PC-9 (cell line): ENCODE measurements at regions of chr5 and their contacts with region 1.

Region 1: DNA sequence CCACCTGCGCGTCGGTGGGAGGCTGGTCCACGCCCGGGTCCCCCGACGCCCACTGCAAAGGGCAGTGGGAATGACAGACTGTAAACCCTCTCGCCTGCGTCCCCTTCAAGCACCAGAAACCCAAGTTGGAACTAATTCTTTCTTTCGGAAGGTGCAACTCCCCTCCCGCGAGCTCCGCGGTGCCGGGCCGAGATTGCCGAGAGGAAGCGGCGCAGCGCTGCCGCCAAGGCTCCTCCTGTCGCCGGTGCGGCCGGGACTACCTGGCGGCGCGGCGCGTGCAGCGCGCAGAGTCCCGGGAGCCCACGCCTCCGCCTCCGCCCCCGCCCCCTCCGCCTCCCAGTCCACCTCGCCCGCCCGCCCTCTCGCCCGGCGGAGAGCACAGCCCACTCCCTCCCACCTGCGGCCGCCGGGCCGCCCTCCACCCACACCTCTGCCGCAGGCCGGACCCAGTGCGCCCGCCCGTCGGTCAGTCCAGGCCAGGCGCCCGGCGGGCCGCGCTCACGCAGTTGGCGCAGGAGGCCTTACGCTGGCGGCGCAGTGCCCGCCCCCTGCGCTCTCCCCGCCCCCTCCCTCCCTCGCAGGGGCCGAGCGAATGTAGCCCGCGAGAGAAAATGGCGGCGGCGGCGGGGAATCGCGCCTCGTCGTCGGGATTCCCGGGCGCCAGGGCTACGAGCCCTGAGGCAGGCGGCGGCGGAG is at the start of gene MAP3K1:
- DNase-seq: peak; percentile 83 to 93
- H3K4me3 ChIP-seq: peak within 1 kb of the TSS; percentile 96
- H3K27ac ChIP-seq: peak within 1 kb of the TSS; percentile 91
- H3K4me1 ChIP-seq: peaks cover 50% of the 10 kb centered on the region
- H3K27me3 ChIP-seq: no peaks in the 10 kb centered on the region
- CTCF ChIP-seq: no peak
- total RNA-seq, gene MAP3K1: 21.8 and 26.1 TPM in 2 replicates

Region 2: GRCh38 chr5:56350598-56351170 is 464.4 kb before region 1 on chr5:
- CTCF ChIA-PET with region 1: no interaction called
- POLR2A ChIA-PET with region 1: no interaction called
- intact Hi-C with region 1: loop called (anchors 1 kb)
- DNase-seq: peak; percentile 81 to 94
- H3K4me3 ChIP-seq: no peak overlapping the region; the same call in 1 of the 2 replicates
- H3K27ac ChIP-seq: peak overlapping the region; percentile 76
- H3K4me1 ChIP-seq: peaks cover 73% of the 10 kb centered on the region
- H3K27me3 ChIP-seq: no peaks in the 10 kb centered on the region
- CTCF ChIP-seq: no peak

Region 3: DNA sequence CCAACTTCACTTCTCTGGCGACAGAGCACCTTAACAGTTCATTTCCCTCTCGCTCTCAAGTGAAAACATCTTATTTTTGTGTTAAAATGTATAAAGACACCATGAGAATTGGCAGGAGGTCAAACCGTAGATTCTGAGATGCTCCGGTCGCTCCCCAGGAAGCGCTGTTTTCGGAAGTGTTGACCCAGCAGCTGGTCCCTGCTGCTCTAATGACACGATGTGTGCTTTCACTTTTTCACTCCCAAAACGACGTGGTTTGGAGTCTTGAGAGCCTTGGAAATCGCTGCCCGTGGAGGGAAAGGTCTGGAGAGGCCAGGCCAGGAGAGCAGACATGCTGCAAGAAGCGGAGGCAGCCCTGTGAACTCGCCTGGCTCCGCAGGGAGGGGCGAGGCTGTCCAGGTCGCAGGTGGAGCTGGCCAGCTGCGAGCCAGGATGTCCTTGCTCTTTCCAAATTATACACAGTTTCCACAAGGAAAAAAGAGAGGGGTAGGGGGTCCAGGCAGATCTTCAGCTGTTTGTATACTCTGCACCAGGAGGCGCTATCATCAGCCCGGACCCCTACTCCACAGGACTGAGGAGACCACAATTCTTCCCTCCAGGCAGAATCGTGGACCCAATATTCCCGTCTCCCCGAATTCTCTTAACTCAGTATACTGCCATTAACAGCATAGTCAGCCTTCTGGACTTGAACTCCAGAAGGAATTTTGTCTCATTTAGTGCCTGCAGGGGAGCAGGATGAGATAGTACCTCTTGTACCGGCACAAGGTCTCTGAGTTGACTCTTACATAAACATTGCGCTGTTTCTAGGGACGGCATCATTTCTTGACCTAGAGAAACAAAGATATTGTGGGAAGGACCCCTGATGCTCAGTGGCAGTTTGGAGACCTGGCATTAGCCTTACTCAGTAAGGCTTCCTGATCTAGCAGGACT is 333.4 kb before region 1 on chr5:
- CTCF ChIA-PET with region 1: no interaction called
- POLR2A ChIA-PET with region 1: no interaction called
- intact Hi-C with region 1: loop called (anchors 5 kb)
- DNase-seq: peak; percentile 34 to 47
- H3K4me3 ChIP-seq: peak overlapping the region; percentile 78
- H3K27ac ChIP-seq: peak overlapping the region; percentile 85
- H3K4me1 ChIP-seq: peaks cover 38% of the 10 kb centered on the region
- H3K27me3 ChIP-seq: no peaks in the 10 kb centered on the region
- CTCF ChIP-seq: peak; percentile 29; the same call in 1 of the 2 replicates

Region 4: GRCh38 chr5:56638061-56638621 is 177.0 kb before region 1 on chr5:
- CTCF ChIA-PET with region 1: no interaction called
- POLR2A ChIA-PET with region 1: interaction called, 3 read pairs
- intact Hi-C with region 1: loop called (anchors 2 kb)
- DNase-seq: peak; percentile 64 to 70
- H3K4me3 ChIP-seq: no peak overlapping the region
- H3K27ac ChIP-seq: no peak overlapping the region
- H3K4me1 ChIP-seq: peaks cover 40% of the 10 kb centered on the region
- H3K27me3 ChIP-seq: no peaks in the 10 kb centered on the region
- CTCF ChIP-seq: no peak

Region 5: DNA sequence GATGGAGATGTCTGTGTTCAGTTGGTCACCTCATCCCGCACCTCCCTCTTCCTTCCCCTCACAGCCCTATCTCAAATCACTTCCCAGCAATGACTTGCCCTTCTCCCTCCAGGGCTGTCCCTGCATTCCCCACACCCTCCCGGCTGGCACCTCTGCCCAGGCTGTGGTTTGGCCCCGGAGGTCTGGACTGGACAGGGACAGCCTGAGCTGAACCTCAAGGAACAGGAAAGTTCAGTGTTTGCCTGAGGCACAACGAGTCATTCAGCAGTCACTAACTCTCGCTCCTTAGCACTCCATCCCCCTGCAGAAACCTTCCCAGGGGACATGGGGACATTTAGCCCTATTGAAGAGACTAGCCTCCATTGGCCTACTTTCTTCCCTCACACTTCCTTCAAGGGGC is 58.0 kb before region 1 on chr5:
- CTCF ChIA-PET with region 1: no interaction called
- POLR2A ChIA-PET with region 1: interaction called, 4 read pairs
- intact Hi-C with region 1: loop called (anchors 1 kb)
- DNase-seq: peak; percentile 94 to 95
- H3K4me3 ChIP-seq: 0 out of 2 replicates have a peak overlapping the region, but pooled peaks have one; percentile 13
- H3K27ac ChIP-seq: peak overlapping the region; percentile 65
- H3K4me1 ChIP-seq: peaks cover 48% of the 10 kb centered on the region
- H3K27me3 ChIP-seq: no peaks in the 10 kb centered on the region
- CTCF ChIP-seq: no peak

Region 6: DNA sequence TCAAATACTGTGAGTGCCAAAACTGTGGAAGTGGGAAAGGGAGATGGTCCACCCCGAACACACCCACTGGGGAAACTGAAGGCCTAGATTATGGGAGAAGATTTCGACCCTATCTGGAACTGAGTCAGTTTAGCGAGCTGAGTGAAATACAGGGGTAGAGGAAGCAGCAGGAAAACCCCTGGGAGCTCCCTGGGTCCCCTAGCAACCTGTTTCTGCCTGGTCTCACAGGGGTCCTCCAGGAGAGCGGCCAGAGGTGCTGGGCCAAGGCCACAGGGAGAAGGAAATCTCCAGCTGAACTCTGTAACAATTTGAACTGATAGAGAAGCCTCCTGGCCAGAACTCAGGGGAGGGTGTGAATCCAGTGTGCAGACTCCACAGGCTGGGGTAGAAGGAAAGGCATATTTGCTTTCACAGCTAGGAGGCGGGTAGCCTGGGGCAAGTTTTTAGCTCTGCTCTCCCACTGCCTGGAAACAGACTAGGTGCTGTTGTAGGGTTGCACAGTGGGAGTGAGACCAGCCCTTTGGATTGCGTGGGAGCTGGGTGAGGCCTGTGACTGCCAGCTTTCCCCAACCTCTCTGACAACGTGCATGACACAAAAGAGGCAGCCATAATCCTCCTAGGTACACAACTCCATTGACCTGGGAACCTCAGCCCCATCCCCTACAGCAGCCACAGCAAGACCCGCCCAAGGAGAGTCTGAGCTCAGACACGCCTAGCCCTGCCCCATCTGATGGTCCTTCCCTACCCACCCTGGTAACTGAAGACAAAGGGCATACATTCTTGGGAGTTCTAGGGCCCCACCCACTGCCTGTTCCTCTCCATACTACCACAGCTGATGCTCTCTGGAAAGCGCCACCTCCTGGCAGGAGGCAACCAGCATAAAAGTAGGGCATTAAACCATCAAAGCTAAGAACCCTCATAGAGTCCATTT is 279.9 kb after region 1 on chr5:
- CTCF ChIA-PET with region 1: interaction called, 10 read pairs
- POLR2A ChIA-PET with region 1: no interaction called
- intact Hi-C with region 1: no loop called
- DNase-seq: peak; percentile 58 to 68
- H3K4me3 ChIP-seq: no peak overlapping the region
- H3K27ac ChIP-seq: peak overlapping the region; percentile 31; the same call in 1 of the 2 replicates
- H3K4me1 ChIP-seq: peaks cover 20% of the 10 kb centered on the region
- H3K27me3 ChIP-seq: no peaks in the 10 kb centered on the region
- CTCF ChIP-seq: peak; percentile 59

Region 7: DNA sequence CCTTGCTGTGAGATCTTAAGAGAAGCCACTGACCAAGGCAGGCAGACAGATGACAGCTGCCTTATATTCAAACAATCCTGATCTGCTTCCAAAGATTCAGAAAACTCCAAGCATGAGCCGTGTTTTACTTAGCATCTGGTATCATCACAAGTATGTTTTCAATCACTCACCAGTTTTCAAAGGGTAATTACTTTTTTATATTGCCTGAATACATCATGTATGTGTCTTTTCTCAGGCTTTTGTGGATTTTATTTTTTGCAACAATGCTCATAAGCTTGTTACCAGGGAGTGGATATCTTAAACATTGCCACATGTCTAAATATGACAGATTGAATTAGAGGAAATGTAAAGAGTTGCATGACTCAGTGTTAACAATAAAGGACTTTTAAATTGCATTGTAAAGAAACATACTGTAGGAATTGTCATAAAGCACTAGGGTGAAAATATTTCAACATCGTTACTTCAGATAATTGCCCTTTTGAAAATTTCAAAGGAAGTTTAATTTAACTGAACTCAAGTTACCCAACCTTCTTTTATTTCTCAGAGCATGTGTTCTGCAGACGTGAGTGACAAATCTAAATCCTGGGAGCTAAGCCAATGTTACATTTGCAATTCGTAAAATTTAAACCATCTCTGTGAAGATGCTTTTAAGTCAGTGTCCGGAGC is 1318.7 kb after region 1 on chr5:
- CTCF ChIA-PET with region 1: no interaction called
- POLR2A ChIA-PET with region 1: no interaction called
- intact Hi-C with region 1: no loop called
- DNase-seq: peak in 1 of 2 experiments; percentile 58
- H3K4me3 ChIP-seq: no peak overlapping the region
- H3K27ac ChIP-seq: no peak overlapping the region
- H3K4me1 ChIP-seq: 0 out of 2 replicates have a peak, but pooled peaks cover 6% of the 10 kb centered on the region
- H3K27me3 ChIP-seq: no peaks in the 10 kb centered on the region
- CTCF ChIP-seq: no peak